ENCODE measurements at regions of chr15 and their contacts with region 1.

Region 1: DNA sequence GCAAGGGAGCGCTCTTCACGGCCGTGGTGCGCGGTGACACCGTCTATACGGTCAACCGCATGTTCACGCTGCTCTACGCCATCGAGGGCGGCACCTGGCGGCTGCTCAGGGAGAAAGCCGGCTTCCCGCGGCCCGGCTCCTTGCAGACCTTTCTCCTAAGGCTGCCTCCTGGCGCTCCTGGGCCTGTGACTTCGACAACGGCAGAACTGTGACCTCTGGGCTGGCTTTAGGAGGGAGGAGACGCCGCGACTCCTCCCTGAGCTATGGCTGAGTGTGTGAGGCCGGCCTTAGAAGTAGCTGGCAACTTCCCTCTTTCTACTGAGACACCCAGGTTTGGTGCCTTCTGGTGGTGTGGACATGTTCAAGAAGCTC is 1.4 kb downstream of the KBTBD13 start:
- DNase-seq: peak; percentile 74 to 86 (median 85)
- H3K4me3 ChIP-seq: peak overlapping the region in 1 of 7 experiments; percentile 10
- H3K27ac ChIP-seq: no peak overlapping the region
- H3K4me1 ChIP-seq: peaks cover 0 to 33% (median 29%) of the 10 kb centered on the region in 4 experiments
- H3K27me3 ChIP-seq: peaks cover 0 to 4% (median 0%) of the 10 kb centered on the region in 5 experiments

Region 2: GRCh38 chr15:65032801-65033537 is 45.0 kb before region 1 on chr15:
- CTCF ChIA-PET with region 1: interaction called, 31 read pairs
- POLR2A ChIA-PET with region 1: no interaction called
- DNase-seq: peak; percentile 66 to 75 (median 74)
- H3K4me3 ChIP-seq: peak overlapping the region in 1 of 7 experiments; percentile 50
- H3K27ac ChIP-seq: no peak overlapping the region
- H3K4me1 ChIP-seq: peaks cover 5 to 24% (median 17%) of the 10 kb centered on the region in 4 experiments
- H3K27me3 ChIP-seq: peaks cover 0 to 3% (median 0%) of the 10 kb centered on the region in 5 experiments

Region 3: DNA sequence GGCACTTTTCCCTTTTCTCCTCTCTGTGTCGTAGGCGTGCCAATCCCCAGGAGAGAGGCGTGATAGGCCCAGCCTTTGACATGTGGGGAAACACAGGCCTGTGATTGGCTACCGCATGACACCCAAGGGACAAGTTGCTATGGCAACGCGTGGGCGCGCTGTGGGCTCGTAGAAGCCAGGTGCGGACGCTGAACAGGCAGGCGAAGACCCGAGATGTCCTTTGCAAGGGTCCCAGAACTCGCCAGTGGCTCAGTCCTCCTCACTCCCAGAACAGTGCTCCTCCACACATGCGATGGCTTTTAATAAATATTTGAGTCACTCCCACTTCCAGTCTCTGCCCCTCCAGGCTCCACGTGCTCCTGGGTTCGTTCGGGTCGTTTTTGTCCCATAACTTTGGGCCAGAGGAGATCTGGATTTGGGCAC is 28.5 kb before region 1 on chr15:
- CTCF ChIA-PET with region 1: interaction called, 282 read pairs
- POLR2A ChIA-PET with region 1: no interaction called
- DNase-seq: peak; percentile 91 to 92 (median 92)
- H3K4me3 ChIP-seq: peak overlapping the region in 5 of 7 experiments; percentile 35 to 70 (median 38)
- H3K27ac ChIP-seq: no peak overlapping the region
- H3K4me1 ChIP-seq: peaks cover 0 to 23% (median 19%) of the 10 kb centered on the region in 4 experiments
- H3K27me3 ChIP-seq: no peaks in the 10 kb centered on the region

Region 4: DNA sequence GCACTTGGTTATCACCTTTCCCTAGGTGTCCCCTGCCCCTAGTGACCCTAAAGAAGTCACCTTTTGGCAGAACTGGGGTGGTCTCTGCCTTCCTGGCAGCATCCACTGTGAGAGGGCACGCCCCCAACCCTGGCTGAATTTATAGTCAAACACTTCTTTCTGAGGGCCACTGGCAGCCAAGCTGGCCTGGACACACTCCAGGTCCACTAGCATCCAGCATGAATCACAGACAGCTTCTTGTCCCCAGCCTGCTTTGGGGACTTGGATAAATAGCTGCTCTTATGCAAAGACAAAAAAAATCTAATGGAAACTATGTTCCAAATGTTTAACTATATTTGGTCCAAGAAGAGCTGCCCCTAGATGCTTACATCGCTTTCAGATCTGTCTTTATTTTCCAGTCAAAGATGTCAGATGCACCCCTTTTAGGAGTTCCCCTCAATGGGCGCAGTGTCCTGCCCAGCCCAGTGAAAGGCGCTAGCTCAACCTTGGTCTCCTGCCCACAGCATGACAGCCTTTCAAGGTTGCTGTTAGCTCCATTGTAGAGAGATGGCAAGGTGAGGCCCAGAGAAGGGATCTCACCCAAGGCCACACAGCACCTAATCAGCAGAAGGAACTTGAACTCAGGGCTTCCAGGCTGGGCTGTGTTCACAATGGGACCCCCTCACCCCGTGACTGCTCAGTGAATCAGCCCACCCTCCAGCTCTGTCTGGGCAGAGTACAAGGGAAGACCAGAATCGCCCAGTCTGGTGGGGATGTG is 17.1 kb before region 1 on chr15:
- CTCF ChIA-PET with region 1: interaction called, 282 read pairs
- POLR2A ChIA-PET with region 1: no interaction called
- DNase-seq: no peak
- H3K4me3 ChIP-seq: no peak overlapping the region
- H3K27ac ChIP-seq: no peak overlapping the region
- H3K4me1 ChIP-seq: peaks cover 3 to 9% (median 8%) of the 10 kb centered on the region in 4 experiments
- H3K27me3 ChIP-seq: peaks cover 0 to 8% (median 5%) of the 10 kb centered on the region in 5 experiments

Region 5: GRCh38 chr15:65101411-65101890 is 23.5 kb after region 1 on chr15:
- CTCF ChIA-PET with region 1: interaction called, 28 read pairs
- POLR2A ChIA-PET with region 1: no interaction called
- DNase-seq: peak; percentile 57 to 79 (median 71)
- H3K4me3 ChIP-seq: no peak overlapping the region
- H3K27ac ChIP-seq: no peak overlapping the region
- H3K4me1 ChIP-seq: peaks cover 0 to 4% (median 0%) of the 10 kb centered on the region in 4 experiments
- H3K27me3 ChIP-seq: no peaks in the 10 kb centered on the region

Measured in common myeloid progenitor, CD34-positive (primary cell).